ENCODE measurements at regions of chr4 and their contacts with region 1.

Region 1: DNA sequence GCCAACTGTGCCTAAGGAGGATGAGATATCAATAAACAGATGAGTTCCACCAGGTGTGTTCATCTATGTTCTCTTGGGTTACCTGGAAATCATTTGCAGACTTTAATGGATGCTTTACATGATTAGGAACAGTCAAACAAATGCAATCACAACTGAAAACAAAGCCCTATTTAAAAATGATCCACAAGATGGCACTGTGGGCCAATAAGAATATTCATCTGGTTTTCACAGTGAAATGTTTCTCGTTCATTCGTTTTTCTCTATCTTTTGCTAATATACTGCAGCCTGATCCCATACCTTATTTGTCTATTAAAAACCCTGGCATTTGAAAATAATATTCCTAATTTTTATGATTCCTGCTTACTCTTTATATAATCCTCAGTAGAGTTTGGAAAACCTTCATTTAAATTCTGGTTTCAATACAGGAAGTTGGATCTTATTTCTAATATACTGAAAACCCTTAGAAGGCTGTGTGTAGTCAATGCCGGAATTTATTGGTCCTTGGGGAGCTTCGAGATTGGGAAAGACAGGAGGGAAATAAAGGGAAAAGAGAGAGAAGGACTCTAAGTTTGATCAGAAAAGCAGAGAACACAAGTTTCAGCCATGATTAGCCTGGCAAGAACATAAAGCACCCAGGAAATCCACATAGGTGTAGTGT is 63.8 kb upstream of the TAPT1 start:
- DNase-seq: peak in 1 of 2 donors; percentile 14
- ATAC-seq: peak in 1 of 8 donors; percentile 49
- H3K4me3 ChIP-seq: peak overlapping the region in 1 of 10 donors; percentile 2
- H3K27ac ChIP-seq: no peak overlapping the region
- H3K4me1 ChIP-seq: peaks cover 0 to 15% (median 0%) of the 10 kb centered on the region in 9 donors
- H3K27me3 ChIP-seq: peaks cover 0 to 33% (median 10%) of the 10 kb centered on the region in 7 donors
- CTCF ChIP-seq: peak; percentile 46 to 85 (median 73)

Region 2: DNA sequence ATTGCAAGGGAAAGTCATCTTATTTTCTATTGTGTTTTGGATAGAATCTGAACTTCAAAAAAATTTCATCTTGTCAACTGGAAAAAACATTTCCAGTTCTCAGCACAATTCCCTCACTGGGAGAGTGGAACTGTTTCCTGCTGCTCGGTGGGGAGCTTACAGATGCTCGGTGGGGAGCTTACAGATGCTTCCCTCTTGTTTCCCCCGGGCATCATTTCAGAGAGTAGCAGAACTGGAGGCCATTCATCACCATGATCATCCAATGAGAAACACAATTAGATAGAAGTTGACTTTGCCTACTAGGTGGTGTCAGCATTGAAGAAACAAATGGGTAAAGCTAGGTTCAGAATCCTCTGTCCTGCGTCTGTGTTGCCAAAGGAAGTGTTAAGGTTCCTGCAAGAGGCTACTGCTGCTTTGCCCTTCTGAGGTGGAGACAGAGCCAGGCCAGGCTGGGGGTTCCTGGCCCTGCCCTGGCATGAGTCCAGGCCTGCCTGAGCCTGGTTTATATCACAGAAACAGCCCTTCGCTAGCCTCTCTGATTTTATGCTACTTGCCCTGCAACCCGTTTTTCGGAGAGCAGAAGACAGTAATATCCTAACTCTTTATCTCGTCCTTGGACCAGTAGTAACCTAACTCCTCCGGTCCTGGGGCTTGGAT is 134.4 kb before region 1 on chr4:
- intact Hi-C with region 1: no loop called
- DNase-seq: peak in 1 of 2 donors; percentile 26
- ATAC-seq: peak in 3 of 8 donors; percentile 25 to 39 (median 29)
- H3K4me3 ChIP-seq: no peak overlapping the region
- H3K27ac ChIP-seq: no peak overlapping the region
- H3K4me1 ChIP-seq: peaks cover 3 to 36% (median 11%) of the 10 kb centered on the region in 9 donors
- H3K27me3 ChIP-seq: no peaks in the 10 kb centered on the region
- CTCF ChIP-seq: no peak

Region 3: GRCh38 chr4:16217300-16218051 is 72.5 kb before region 1 on chr4:
- intact Hi-C with region 1: no loop called
- DNase-seq: no peak
- ATAC-seq: no peak
- H3K4me3 ChIP-seq: no peak overlapping the region
- H3K27ac ChIP-seq: peak overlapping the region in 1 of 10 donors; percentile 3
- H3K4me1 ChIP-seq: peaks cover 0 to 44% (median 36%) of the 10 kb centered on the region in 9 donors
- H3K27me3 ChIP-seq: no peaks in the 10 kb centered on the region
- CTCF ChIP-seq: no peak

Region 4: GRCh38 chr4:16443504-16444088 is 153.6 kb after region 1 on chr4:
- intact Hi-C with region 1: loop called in 9 of 10 experiments (anchors 2 to 10 kb)
- DNase-seq: peak in 1 of 2 donors; percentile 6
- ATAC-seq: peak in 1 of 8 donors; percentile 26
- H3K4me3 ChIP-seq: no peak overlapping the region
- H3K27ac ChIP-seq: no peak overlapping the region
- H3K4me1 ChIP-seq: peaks cover 0 to 12% (median 0%) of the 10 kb centered on the region in 9 donors
- H3K27me3 ChIP-seq: no peaks in the 10 kb centered on the region
- CTCF ChIP-seq: peak; percentile 42 to 78 (median 67)

Region 5: DNA sequence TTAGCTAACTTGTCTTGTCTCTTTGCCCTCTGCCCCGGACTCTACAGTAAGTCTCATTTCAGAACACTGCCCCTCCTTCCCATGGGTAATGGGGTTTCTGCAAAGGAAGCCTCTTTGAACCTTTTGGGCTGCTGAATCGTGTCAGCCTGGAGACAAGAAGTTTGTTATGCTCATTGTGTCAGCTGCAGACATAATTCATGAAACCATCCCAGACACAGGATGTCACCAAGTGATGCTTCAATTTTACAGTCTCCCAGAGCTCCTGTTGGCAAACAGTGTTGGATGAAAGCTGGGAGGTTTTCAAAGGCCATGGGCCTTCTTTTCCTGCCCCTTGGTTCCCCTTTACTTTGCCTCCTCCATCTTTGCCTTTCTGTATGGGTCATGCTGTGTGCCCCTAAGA is 159.4 kb after region 1 on chr4:
- intact Hi-C with region 1: loop called in 6 of 10 experiments (anchors 2 to 10 kb)
- DNase-seq: no peak
- ATAC-seq: no peak
- H3K4me3 ChIP-seq: no peak overlapping the region
- H3K27ac ChIP-seq: no peak overlapping the region
- H3K4me1 ChIP-seq: no peaks in the 10 kb centered on the region
- H3K27me3 ChIP-seq: no peaks in the 10 kb centered on the region
- CTCF ChIP-seq: no peak

Region 6: GRCh38 chr4:17336524-17336961 is 1046.5 kb after region 1 on chr4:
- intact Hi-C with region 1: loop called in 1 of 10 experiments (anchors 10 kb)
- DNase-seq: peak in 1 of 2 donors; percentile 38
- ATAC-seq: peak in 7 of 8 donors; percentile 18 to 79 (median 47)
- H3K4me3 ChIP-seq: no peak overlapping the region
- H3K27ac ChIP-seq: no peak overlapping the region
- H3K4me1 ChIP-seq: no peaks in the 10 kb centered on the region
- H3K27me3 ChIP-seq: peaks cover 0 to 5% (median 0%) of the 10 kb centered on the region in 7 donors
- CTCF ChIP-seq: no peak

Region 7: GRCh38 chr4:17447675-17448298 is 1157.8 kb after region 1 on chr4:
- intact Hi-C with region 1: loop called in 9 of 10 experiments (anchors 5 to 10 kb)
- DNase-seq: peak in 1 of 2 donors; percentile 66
- ATAC-seq: peak; percentile 55 to 91 (median 86)
- H3K4me3 ChIP-seq: no peak overlapping the region
- H3K27ac ChIP-seq: no peak overlapping the region
- H3K4me1 ChIP-seq: peaks cover 0 to 9% (median 0%) of the 10 kb centered on the region in 9 donors
- H3K27me3 ChIP-seq: no peaks in the 10 kb centered on the region
- CTCF ChIP-seq: peak; percentile 22 to 78 (median 72)

Region 8: GRCh38 chr4:17468371-17469221 is 1178.6 kb after region 1 on chr4:
- intact Hi-C with region 1: loop called in 2 of 10 experiments (anchors 10 kb)
- DNase-seq: peak in 1 of 2 donors; percentile 15
- ATAC-seq: no peak
- H3K4me3 ChIP-seq: no peak overlapping the region
- H3K27ac ChIP-seq: no peak overlapping the region
- H3K4me1 ChIP-seq: peaks cover 0 to 5% (median 0%) of the 10 kb centered on the region in 9 donors
- H3K27me3 ChIP-seq: no peaks in the 10 kb centered on the region
- CTCF ChIP-seq: peak; percentile 41 to 72 (median 56)

Region 9: DNA sequence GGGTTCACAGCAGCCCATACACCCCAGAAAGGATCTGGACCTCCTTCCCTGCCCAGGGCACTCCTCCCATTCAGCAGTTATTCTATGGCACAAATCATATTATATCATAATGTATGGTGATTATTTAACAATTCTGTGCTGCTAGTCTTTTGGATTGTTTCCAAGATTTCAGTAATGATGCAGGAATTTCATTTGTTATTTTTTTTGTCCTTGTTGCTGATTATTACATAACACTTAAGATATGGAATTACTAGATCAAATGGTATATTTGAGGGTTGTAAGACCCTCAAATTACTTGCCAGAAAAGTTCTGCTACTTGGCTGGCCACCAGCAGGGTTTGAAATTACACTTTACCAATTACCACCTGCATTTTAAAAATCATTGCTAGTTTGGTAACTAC is 1185.5 kb after region 1 on chr4:
- intact Hi-C with region 1: loop called in 2 of 10 experiments (anchors 2 to 10 kb)
- DNase-seq: no peak
- ATAC-seq: no peak
- H3K4me3 ChIP-seq: no peak overlapping the region
- H3K27ac ChIP-seq: no peak overlapping the region
- H3K4me1 ChIP-seq: no peaks in the 10 kb centered on the region
- H3K27me3 ChIP-seq: no peaks in the 10 kb centered on the region
- CTCF ChIP-seq: no peak